ENCODE measurements at regions of chr4 and their contacts with region 1.

Region 1: DNA sequence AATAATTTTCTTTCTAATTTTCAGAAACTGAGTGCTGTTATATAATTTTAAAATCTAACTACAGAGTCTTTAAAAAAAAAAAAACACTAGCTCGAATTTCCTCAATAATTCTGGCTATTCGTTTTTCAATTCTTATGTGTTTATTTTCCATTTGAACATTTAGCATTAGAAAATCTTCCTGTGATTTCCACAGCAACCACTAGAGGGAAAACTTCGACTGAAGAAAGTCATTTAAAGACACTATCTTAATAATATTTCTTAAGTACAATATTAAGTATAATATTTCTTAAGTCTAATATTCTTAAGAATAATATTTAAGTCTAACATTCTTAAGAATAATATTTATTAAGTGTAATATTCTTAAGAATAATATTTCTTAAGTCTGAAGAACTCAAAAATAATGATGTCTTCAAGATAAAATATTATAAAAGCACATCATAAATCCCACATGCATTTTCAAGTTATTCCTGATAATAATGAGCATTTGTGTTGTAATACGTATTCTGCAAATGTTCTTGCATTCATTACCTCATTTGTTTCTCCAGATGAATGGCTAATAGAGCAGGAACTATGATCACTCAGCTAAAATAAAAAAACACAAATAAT is 118.4 kb upstream of the WDR17 start:
- DNase-seq: no peak
- H3K4me3 Mint-ChIP-seq: no peak overlapping the region
- H3K27ac Mint-ChIP-seq: no peak overlapping the region
- H3K4me1 Mint-ChIP-seq: peaks cover 6% of the 10 kb centered on the region
- H3K27me3 Mint-ChIP-seq: peaks cover 10% of the 10 kb centered on the region

Region 2: DNA sequence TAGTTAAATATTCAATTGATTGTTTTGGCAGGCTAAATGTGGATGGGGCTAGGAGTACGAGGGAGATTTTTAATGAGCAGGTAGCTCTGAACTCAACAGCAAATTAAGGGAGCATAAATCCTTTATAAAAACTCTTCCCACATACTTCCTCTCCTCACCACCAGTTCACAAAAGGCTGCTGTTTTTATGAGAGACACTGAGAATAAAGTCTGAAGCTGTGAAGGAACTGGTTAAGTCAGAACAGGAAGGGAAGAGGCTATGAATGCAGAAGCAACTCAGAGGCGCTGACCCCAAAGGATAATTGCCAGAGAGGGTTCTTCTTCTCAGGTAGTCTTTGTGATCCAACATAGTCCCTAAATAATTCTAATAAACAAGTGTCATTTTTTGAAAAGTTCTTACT is 541.3 kb before region 1 on chr4:
- CTCF ChIA-PET with region 1: no interaction called
- intact Hi-C with region 1: no loop called
- DNase-seq: no peak
- H3K4me3 Mint-ChIP-seq: no peak overlapping the region
- H3K27ac Mint-ChIP-seq: no peak overlapping the region
- H3K4me1 Mint-ChIP-seq: no peaks in the 10 kb centered on the region
- H3K27me3 Mint-ChIP-seq: no peaks in the 10 kb centered on the region

Region 3: DNA sequence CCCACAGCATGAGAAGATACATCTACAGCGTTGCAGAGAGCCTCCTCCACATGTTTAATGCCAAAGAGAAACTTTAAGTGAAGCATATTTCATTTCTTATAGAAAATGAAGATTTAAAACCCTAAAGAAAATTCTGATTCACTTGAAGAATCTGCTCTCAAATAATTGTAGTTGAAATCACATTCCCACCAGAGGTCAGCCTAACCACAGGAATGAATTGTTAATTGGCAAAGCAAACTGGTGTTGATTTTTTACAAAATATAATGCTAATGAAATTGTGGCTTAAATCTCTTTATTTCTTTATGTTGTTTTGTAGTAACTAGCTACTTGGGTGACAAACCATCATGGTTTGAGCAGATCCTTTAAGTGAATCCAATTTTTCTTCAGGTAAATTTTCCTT is 87.3 kb after region 1 on chr4:
- CTCF ChIA-PET with region 1: no interaction called
- intact Hi-C with region 1: no loop called
- DNase-seq: peak; percentile 28
- H3K4me3 Mint-ChIP-seq: no peak overlapping the region
- H3K27ac Mint-ChIP-seq: no peak overlapping the region
- H3K4me1 Mint-ChIP-seq: no peaks in the 10 kb centered on the region
- H3K27me3 Mint-ChIP-seq: no peaks in the 10 kb centered on the region

Region 4: GRCh38 chr4:176065435-176066291 is 118.4 kb after region 1 on chr4 and contains the start of gene WDR17:
- CTCF ChIA-PET with region 1: no interaction called
- intact Hi-C with region 1: loop called (anchors 2 kb)
- DNase-seq: peak; percentile 80
- H3K4me3 Mint-ChIP-seq: peak within 1 kb of the TSS; percentile 86
- H3K27ac Mint-ChIP-seq: no peak within 1 kb of the TSS
- H3K4me1 Mint-ChIP-seq: peaks cover 11% of the 10 kb centered on the region
- H3K27me3 Mint-ChIP-seq: peaks cover 20% of the 10 kb centered on the region
- total RNA-seq, gene WDR17: 1.4 to 1.7 TPM

Region 5: DNA sequence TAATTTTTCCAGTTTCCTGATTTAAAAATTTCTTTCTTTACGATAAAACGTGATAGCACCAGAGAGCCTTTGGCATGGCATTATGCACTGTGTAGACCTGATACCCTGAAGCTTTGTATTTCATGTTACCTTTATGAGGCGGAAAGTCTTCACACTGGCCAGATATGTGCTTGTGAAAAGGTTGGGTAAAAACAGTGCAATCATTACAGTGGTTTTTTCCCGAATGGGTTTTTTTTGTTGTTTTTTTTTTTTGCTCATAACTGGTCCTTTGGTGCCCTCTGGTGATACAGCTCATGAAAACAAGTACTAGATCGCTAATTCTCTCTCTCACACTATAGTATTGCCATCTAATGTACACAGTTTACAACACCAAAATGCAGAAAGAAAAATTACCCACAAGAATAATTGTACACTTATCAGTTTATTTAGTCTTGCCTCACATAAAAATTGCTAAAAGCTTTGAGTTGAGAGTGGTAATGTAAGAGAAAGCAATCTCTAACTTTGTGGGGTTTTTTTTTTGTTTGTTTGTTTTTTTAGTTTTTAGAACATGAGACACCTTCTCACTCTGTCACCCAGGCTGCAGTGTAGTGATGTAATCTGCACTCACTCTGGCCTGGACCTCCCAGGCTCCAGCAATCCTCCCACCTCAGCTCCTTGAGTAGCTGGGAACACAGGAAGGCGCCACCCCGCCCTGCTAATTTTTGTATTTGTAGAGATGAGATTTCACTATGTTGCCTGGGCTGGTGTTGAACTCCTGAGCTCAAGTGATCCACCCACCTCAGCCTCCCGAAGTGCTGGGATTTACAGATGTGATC is 393.9 kb after region 1 on chr4:
- CTCF ChIA-PET with region 1: interaction called, 9 read pairs
- intact Hi-C with region 1: loop called (anchors 1 kb)
- DNase-seq: no peak
- H3K4me3 Mint-ChIP-seq: no peak overlapping the region
- H3K27ac Mint-ChIP-seq: no peak overlapping the region
- H3K4me1 Mint-ChIP-seq: peaks cover 2% of the 10 kb centered on the region
- H3K27me3 Mint-ChIP-seq: no peaks in the 10 kb centered on the region

Measured in activated naive CD4-positive, alpha-beta T cell treated with anti-CD3 and anti-CD28 coated beads for 36 hours (primary cell).